ENCODE measurements at regions of chr7 and their contacts with region 1.

Region 1: DNA sequence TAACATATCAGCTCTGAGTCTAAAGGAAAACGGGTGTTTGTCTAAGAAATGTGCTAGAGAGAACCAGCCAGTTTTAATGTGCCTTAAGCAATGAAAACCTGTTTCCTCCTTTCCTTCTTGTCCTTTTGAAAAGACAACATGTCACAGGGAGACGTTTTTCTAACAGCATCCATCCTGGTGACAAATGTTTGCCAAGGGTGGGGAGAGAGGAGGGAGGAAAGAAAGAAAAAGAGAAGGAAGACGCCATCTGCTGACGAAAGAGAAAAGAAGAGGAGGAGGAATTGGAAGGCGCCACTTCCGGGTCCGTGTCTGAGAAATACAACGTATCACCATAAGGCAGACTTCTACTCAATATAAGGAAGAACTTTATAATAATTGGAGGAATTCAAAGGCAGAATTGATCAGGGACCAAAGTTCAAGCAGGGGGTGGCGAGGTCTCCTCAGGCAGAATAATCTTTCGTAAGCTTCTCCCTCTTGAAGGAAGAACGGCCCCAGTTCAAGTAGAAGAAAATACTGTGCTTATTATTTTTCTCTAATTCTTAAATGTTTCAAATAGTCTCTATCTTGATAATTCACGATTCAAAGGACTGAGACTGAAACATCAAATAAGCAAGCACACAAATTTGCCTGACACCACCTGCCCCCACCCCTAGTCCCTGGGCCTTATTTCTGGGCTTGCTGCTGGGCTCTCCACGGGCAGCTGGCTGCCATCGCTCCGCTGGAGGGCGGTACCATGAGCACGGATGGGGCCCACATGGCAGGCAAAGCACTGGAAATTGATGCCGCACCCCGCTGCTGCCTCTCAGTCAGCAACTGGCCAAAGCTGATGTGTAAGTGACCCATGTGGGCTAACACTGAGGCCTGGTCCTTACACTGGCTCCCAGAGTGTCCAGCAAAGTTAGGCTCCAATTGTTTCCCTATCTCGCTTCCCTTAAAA is 273.7 kb upstream of the KLF14 start:
- DNase-seq: peak; percentile 66 to 81
- ATAC-seq: peak; percentile 75
- H3K4me3 ChIP-seq: no peak overlapping the region
- H3K27ac ChIP-seq: peak overlapping the region in 1 of 2 donors; percentile 25
- H3K4me1 ChIP-seq: peaks cover 6 to 9% of the 10 kb centered on the region in 2 donors
- H3K27me3 ChIP-seq: no peaks in the 10 kb centered on the region

Region 2: DNA sequence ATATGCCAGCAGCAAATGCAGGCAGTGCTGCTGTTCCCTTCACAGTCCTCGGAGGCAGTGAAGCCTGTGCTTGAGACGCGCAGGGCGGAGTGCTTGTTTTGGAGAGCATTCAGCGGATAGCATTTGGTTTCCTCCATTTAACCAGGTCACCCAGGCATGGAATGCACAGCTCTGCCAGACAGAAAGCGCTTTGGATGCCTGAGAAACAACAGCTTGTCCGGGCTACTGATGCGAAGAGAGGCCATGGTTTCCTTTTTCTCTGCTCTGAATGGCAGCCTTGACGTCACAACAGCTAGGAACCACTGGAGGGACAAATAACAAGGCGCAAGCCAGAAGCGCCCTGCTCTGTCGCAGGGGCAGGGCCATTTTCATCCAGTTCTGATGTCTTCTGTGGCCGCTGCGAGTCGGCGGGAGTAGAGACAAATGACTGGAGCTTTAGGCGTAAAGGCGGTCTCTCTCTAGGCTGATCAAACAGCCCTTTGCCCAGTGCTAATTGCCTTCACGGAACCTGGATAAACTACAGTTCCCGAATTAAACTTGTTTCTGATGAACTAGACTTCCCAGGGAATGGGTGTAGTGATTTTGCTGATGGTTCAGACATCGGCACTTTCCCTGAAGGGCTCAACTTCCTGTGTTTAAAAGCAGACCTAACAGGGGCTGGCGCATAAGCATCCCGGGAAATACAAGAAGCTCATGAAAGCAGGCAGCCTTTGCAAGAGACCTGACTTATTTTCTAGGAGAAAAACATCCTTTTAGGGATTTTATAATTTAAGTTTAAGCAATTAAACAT is 86.1 kb before region 1 on chr7:
- intact Hi-C with region 1: loop called in 1 of 2 experiments (anchors 5 kb)
- DNase-seq: peak; percentile 84 to 85
- ATAC-seq: peak; percentile 89
- H3K4me3 ChIP-seq: peak overlapping the region; percentile 15 to 61
- H3K27ac ChIP-seq: peak overlapping the region; percentile 91 to 95
- H3K4me1 ChIP-seq: peaks cover 0 to 12% of the 10 kb centered on the region in 2 donors
- H3K27me3 ChIP-seq: no peaks in the 10 kb centered on the region